ENCODE measurements at regions of chr1 and their contacts with region 1.

Region 1: GRCh38 chr1:48767975-48768510 is 8.6 kb downstream of the BEND5 start:
- DNase-seq: peak; percentile 53
- ATAC-seq: peak; percentile 80
- H3K4me3 ChIP-seq: peak overlapping the region in 1 of 5 experiments; percentile 27
- H3K4me3 Mint-ChIP-seq: peak overlapping the region; percentile 66
- H3K27ac ChIP-seq: peak overlapping the region; percentile 42 to 85
- H3K27ac Mint-ChIP-seq: peak overlapping the region; percentile 84
- H3K4me1 ChIP-seq: peaks cover 65 to 72% of the 10 kb centered on the region in 2 donors
- H3K4me1 Mint-ChIP-seq: peaks cover 90% of the 10 kb centered on the region
- H3K27me3 ChIP-seq: no peaks in the 10 kb centered on the region
- H3K27me3 Mint-ChIP-seq: no peaks in the 10 kb centered on the region
- CTCF ChIP-seq: no peak

Region 2: DNA sequence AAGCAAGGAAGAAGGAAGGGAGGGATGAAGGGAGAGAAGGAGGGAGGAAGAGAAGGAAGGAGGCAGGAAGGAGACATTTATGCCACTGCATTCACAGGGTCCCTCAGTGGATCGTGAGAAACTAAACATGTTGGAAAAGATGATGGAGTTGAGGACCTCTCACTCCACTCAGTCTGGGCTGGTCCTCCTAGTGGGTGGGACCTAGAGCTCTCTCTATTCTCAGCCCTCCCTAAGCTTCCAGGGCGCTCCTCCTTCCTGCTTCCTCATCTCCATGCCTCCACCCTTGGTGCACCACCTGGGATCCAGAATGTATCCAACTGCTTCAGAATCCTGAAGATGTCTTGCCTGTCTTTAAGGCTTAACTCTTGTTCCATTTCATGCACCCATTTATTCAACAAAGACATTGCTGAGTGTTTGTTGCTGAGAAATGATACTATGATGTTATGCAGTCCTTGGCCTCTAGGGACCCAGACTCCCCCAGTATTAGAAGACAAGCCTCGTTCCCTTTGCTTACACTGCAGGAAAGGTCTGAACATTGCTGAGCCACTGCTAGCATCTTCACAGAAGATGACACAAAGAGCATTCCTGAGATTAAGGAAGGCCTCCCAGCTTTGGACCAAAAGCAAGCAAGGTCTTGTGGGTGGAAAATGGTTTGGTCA is 79.8 kb before region 1 on chr1:
- CTCF ChIA-PET with region 1: no interaction called
- POLR2A ChIA-PET with region 1: no interaction called
- intact Hi-C with region 1: no loop called
- DNase-seq: no peak
- ATAC-seq: no peak
- H3K4me3 ChIP-seq: no peak overlapping the region
- H3K4me3 Mint-ChIP-seq: no peak overlapping the region
- H3K27ac ChIP-seq: no peak overlapping the region
- H3K27ac Mint-ChIP-seq: no peak overlapping the region
- H3K4me1 ChIP-seq: no peaks in the 10 kb centered on the region
- H3K4me1 Mint-ChIP-seq: peaks cover 2% of the 10 kb centered on the region
- H3K27me3 ChIP-seq: no peaks in the 10 kb centered on the region
- H3K27me3 Mint-ChIP-seq: peaks cover 5% of the 10 kb centered on the region
- CTCF ChIP-seq: peak; percentile 41

Region 3: DNA sequence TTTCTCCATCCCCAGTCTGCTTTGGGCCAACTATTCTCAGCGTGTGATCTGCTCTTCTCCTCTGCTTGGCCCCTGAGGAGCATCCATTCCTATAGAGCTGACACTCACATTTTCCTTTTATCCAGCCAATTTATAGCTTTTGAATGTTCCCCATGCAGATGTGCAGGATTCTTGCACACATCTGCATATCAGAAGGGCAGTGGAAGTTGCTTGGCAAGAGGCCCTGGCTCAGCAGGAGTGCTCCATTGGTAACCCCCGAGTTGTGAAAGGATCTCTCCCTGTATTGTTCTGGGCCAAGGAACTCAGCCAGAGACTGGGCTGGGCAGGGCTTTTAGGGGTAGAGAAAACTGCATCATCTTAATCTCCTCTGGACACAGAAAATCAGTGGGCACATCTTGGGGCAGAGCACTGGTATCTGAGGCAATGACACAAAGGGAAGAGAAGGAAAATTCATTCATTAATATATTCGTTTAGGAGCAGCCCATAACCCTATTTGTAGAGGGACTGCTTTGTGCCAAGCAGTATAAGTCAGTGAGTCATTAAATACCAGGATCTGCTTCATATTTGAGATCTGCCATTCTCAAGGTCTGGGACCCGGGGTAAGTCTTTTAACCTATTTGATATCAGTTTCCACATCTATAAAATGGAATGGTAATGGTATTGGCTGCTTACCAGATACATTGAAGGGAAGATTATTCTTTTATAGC is 39.7 kb after region 1 on chr1:
- CTCF ChIA-PET with region 1: interaction called, 3 read pairs
- POLR2A ChIA-PET with region 1: no interaction called
- intact Hi-C with region 1: loop called (anchors 5 kb)
- DNase-seq: no peak
- ATAC-seq: no peak
- H3K4me3 ChIP-seq: no peak overlapping the region
- H3K4me3 Mint-ChIP-seq: no peak overlapping the region
- H3K27ac ChIP-seq: no peak overlapping the region
- H3K27ac Mint-ChIP-seq: no peak overlapping the region
- H3K4me1 ChIP-seq: peaks cover 19 to 21% of the 10 kb centered on the region in 2 donors
- H3K4me1 Mint-ChIP-seq: peaks cover 28% of the 10 kb centered on the region
- H3K27me3 ChIP-seq: no peaks in the 10 kb centered on the region
- H3K27me3 Mint-ChIP-seq: no peaks in the 10 kb centered on the region
- CTCF ChIP-seq: no peak